Sigmoid colon (tissue), 7 donors: ENCODE measurements at regions of chr4 and their contacts with region 1.

Region 1: DNA sequence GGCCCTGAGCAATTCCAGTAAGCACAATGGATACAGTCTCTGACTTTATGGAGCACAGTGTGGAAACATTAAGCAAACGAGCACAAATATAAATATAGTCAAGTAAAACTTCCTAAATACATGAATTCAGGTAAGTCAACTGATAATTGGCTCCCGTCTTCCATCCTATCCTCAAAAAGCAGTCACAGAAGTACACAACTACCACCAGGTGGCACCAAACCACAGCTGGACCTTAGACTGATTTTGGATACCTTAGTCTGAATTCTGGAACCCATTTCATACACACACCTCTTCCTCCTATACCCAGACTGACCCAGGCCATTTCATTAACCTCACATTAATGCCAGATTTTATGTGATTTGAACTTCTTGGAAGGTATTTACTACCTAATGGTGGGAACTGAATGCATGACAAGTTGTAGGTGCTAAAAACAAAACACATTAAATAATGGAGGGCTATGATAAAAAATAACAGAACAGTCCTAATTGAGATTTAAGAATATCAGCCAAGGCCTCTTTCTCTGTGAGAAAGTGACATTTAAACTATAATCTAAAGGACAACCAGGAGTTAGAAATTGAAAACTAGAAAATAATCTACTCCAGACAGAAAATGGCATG is 77.5 kb downstream of the ELF2 start:
- DNase-seq: peak; percentile 82
- H3K4me3 ChIP-seq: no peak overlapping the region
- H3K27ac ChIP-seq: no peak overlapping the region
- H3K4me1 ChIP-seq: peaks cover 0 to 7% (median 0%) of the 10 kb centered on the region in 4 donors
- H3K27me3 ChIP-seq: no peaks in the 10 kb centered on the region
- CTCF ChIP-seq: peak; percentile 56 to 88 (median 74)
- EP300 ChIP-seq: no peak
- POLR2A ChIP-seq: no peak

Region 2: GRCh38 chr4:139167774-139168444 is 68.4 kb after region 1 on chr4:
- intact Hi-C with region 1: loop called (anchors 5 kb)
- DNase-seq: no peak
- H3K4me3 ChIP-seq: no peak overlapping the region
- H3K27ac ChIP-seq: peak overlapping the region in 2 of 4 donors; percentile 20 to 41
- H3K4me1 ChIP-seq: peaks cover 0 to 63% (median 50%) of the 10 kb centered on the region in 4 donors
- H3K27me3 ChIP-seq: no peaks in the 10 kb centered on the region
- CTCF ChIP-seq: peak; percentile 36 to 48 (median 40)
- EP300 ChIP-seq: no peak
- POLR2A ChIP-seq: no peak